IMR-90 (cell line): ENCODE measurements at regions of chr2 and their contacts with region 1.

Region 1: DNA sequence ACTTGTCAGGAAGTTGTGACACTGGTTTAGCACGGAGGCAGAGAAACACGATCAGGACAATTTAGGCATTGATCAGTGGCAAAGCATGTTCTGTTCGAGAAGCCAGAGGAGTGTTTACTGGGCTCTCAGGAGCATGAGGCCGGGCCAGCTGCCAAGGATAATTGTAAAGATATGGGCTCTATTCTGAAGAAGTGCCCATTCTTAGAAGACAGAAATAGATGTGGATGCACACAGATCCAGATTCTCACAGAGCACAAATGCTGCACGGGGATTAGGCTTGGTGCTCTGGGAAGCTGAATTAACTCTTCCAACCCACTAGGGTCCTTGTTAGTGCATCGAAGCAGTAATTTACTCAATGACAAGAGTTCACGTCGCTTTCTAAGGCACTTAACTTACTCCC is 16.2 kb downstream of the AFF3 start:
- DNase-seq: peak; percentile 7
- ATAC-seq: peak; percentile 21; the same call in 1 of the 2 replicates
- H3K4me3 ChIP-seq: no peak overlapping the region
- H3K27ac ChIP-seq: no peak overlapping the region
- H3K4me1 ChIP-seq: no peaks in the 10 kb centered on the region
- H3K27me3 ChIP-seq: no peaks in the 10 kb centered on the region
- CTCF ChIP-seq: no peak
- POLR2A ChIP-seq: no peak
- RAD21 ChIP-seq: no peak

Region 2: GRCh38 chr2:100174026-100174431 is 47.8 kb after region 1 on chr2:
- CTCF ChIA-PET with region 1: no interaction called
- POLR2A ChIA-PET with region 1: no interaction called
- dilution Hi-C with region 1: no loop called
- in situ Hi-C with region 1: no loop called
- intact Hi-C with region 1: loop called (anchors 5 kb)
- DNase-seq: no peak
- ATAC-seq: peak; percentile 51
- H3K4me3 ChIP-seq: no peak overlapping the region
- H3K27ac ChIP-seq: peak overlapping the region; percentile 1; the same call in 1 of the 2 replicates
- H3K4me1 ChIP-seq: no peaks in the 10 kb centered on the region; the same call in 1 of the 2 replicates
- H3K27me3 ChIP-seq: no peaks in the 10 kb centered on the region
- CTCF ChIP-seq: no peak
- POLR2A ChIP-seq: no peak
- RAD21 ChIP-seq: no peak